Psoas muscle (tissue), 8 donors: ENCODE measurements at regions of chr11 and their contacts with region 1.

Region 1: GRCh38 chr11:22115470-22116029 is 77.3 kb upstream of the ANO5 start:
- DNase-seq: peak in 1 of 2 donors; percentile 52
- ATAC-seq: peak; percentile 97 to 100 (median 99)
- H3K4me3 ChIP-seq: peak overlapping the region; percentile 11
- H3K27ac ChIP-seq: peak overlapping the region; percentile 71
- H3K4me1 ChIP-seq: peaks cover 26% of the 10 kb centered on the region
- H3K27me3 ChIP-seq: no peaks in the 10 kb centered on the region
- CTCF ChIP-seq: no peak

Region 2: DNA sequence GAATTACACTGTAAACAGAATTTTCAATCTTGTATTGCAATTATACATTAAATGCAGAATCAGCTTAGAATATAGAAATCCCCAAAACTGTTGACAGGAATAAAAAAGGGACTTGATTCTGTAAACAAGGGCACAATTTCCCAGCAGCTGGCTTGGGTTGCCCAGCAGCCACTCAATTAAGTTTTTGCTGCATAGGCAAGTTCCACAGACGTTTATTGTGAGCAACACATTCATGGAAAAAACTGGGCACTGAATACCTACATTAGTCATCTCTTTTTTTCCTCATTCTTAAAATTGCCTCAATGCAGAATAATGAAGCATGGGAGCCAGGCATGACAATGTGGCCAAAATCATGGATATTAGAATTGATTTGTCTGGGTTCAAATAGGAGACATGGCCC is 344.5 kb before region 1 on chr11:
- intact Hi-C with region 1: loop called in 1 of 2 experiments (anchors 10 kb)
- DNase-seq: no peak
- ATAC-seq: no peak
- H3K4me3 ChIP-seq: no peak overlapping the region
- H3K27ac ChIP-seq: no peak overlapping the region
- H3K4me1 ChIP-seq: peaks cover 24% of the 10 kb centered on the region
- H3K27me3 ChIP-seq: no peaks in the 10 kb centered on the region
- CTCF ChIP-seq: no peak

Region 3: GRCh38 chr11:21988477-21988876 is 127.1 kb before region 1 on chr11:
- intact Hi-C with region 1: no loop called
- DNase-seq: no peak
- ATAC-seq: peak in 2 of 4 donors; percentile 30 to 47
- H3K4me3 ChIP-seq: no peak overlapping the region
- H3K27ac ChIP-seq: no peak overlapping the region
- H3K4me1 ChIP-seq: no peaks in the 10 kb centered on the region
- H3K27me3 ChIP-seq: no peaks in the 10 kb centered on the region
- CTCF ChIP-seq: peak; percentile 21

Region 4: DNA sequence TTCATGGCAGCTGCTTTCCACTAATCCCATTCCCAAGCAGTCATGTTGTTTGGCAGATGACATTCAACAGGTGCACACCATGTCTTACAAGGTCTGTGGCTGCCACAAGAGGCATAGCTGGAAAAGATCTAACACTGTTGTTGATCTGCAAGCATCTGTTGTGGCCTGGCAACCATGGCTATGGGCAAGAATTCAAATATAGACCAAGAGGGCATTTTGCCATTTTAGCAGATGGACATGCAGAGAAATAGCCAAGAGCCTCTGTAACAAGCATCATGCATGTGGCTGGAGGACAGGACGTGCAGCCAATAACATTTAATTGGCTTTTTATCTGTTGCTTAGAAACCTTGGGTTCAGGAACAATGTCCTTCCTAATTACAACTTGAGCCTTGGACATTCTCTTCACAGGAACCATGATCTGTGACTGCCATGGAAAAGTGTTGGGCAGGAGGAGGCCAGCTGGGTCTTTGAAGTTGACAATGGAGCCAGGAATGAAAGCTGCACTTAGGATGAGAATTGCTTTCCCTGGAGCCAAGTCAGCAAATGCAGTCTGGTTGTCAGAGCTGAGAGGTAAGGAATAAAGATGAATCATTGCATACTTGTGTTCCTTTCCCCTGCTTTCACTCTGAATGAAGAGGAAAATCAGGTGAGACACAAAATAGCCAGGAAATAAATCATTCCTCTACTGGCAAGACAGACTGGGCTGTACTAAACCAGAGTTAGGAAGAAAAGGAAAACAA is 36.2 kb before region 1 on chr11:
- intact Hi-C with region 1: loop called in 1 of 2 experiments (anchors 5 kb)
- DNase-seq: no peak
- ATAC-seq: peak; percentile 85 to 98 (median 96)
- H3K4me3 ChIP-seq: no peak overlapping the region
- H3K27ac ChIP-seq: peak overlapping the region; percentile 49
- H3K4me1 ChIP-seq: peaks cover 10% of the 10 kb centered on the region
- H3K27me3 ChIP-seq: no peaks in the 10 kb centered on the region
- CTCF ChIP-seq: no peak